HEK293 (cell line): ENCODE measurements at regions of chr17 and their contacts with region 1.

Region 1: DNA sequence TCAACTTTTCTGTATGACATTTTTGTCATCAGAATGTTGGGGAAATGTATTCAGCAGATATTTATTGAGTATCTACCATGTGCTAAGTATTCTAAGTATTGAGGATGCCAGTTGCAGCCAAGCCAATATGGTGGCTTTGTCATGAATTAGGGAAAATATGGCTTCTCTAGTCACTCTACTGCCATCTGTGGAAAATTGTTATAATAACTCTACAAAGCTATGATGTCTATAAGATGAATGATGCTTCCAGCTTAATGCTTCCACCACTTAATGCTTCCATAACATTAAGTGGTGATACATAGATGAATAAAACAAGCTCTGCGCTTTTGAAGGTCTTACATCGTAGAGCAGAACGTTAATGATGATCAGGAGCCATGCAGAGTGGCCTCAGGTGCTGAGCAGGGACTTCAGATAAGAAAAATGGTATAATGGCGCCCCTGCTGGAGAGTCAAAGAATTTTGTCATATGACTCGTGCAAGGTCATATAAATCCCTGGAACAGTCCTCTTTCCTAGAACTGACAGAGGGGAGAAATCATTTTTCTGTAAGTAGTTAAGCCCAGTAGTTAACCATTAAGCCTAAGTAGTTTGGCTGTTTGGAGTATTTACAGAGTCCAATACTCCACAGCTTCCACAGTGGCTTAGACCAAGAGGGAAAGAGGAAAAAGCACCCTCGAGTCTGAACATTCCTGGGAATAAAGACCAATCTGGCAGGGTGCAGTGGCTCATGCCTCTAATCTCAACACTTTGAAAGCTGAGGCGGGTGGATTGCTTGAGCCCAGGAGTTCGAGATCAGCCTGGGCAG is 2.7 kb upstream of the TMIGD1 start:
- H3K4me3 ChIP-seq: no peak overlapping the region
- H3K27ac ChIP-seq: no peak overlapping the region
- H3K4me1 ChIP-seq: peaks cover 4% of the 10 kb centered on the region
- CTCF ChIP-seq: peak; percentile 23; the same call in 1 of the 2 replicates

Region 2: DNA sequence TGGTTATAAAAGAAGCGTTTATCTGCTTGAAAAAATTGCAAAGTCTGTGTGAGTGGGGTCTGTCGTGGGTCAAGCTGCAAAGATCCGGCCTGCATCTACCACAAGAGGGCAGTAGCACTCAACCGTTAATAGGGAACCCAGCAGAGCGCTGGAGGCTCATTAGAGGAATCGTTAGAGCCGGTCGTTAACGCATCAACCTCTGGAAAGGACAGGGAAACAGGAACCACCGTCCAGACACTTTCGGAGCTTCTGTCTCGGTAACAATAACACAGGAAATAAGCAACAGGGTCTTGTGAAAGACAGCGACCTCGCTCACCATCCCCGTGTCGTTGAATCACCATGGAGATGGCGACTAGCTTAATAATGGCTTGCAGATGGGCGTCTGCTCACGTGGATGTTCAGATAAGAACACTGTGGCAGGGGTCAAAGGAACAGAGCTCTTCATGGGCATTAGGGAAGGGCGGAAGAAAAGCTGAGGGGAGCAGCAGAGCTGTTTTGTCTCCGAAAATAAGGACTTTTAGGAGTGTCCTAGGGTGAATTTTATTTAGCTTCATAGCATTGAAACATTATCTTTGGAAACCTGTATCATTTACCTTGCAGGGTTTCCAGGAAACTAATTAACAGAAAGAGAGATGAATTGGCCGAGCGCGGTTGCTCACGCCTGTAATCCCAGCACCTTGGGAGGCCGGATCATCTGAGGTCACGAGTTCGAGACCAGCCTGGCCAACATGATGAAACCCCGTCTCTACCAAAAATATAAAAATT is 231.8 kb before region 1 on chr17:
- CTCF ChIA-PET with region 1: interaction called, 170 read pairs
- POLR2A ChIA-PET with region 1: interaction called, 6 read pairs
- H3K4me3 ChIP-seq: peak overlapping the region; percentile 40
- H3K27ac ChIP-seq: peak overlapping the region; percentile 26; the same call in 1 of the 2 replicates
- H3K4me1 ChIP-seq: no peaks in the 10 kb centered on the region
- CTCF ChIP-seq: peak; percentile 83

Region 3: GRCh38 chr17:30278032-30278431 is 58.5 kb before region 1 on chr17:
- CTCF ChIA-PET with region 1: interaction called, 17 read pairs
- POLR2A ChIA-PET with region 1: no interaction called
- H3K4me3 ChIP-seq: no peak overlapping the region
- H3K27ac ChIP-seq: no peak overlapping the region
- H3K4me1 ChIP-seq: no peaks in the 10 kb centered on the region
- CTCF ChIP-seq: no peak

Region 4: DNA sequence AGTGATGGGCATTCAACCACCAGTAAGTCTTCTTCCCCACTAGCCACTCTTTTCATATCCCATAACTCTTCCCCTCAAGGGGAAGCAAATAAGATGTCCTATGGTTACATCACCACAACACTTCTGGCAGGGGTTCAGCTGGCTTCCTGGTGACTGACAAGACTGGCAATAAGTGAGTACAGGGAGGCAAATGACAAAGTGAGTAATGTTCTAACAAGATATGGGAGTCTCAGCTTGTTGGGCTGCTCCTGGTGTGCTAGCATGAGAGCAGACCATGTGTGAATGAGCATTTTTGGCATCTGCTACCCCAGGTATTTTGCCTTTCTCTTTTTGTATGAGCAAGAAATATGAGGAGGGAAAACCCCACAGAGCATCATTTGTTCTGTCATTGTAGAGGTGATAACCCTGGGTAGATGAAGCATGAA is 12.7 kb before region 1 on chr17:
- CTCF ChIA-PET with region 1: interaction called, 31 read pairs
- POLR2A ChIA-PET with region 1: interaction called, 5 read pairs
- H3K4me3 ChIP-seq: no peak overlapping the region
- H3K27ac ChIP-seq: no peak overlapping the region
- H3K4me1 ChIP-seq: 0 out of 2 replicates have a peak, but pooled peaks cover 3% of the 10 kb centered on the region
- CTCF ChIP-seq: no peak

Region 5: GRCh38 chr17:30477083-30477773 is 140.7 kb after region 1 on chr17 and contains the start of gene GOSR1:
- CTCF ChIA-PET with region 1: interaction called, 19 read pairs
- POLR2A ChIA-PET with region 1: no interaction called
- H3K4me3 ChIP-seq: peak within 1 kb of the TSS; percentile 73
- H3K27ac ChIP-seq: peak within 1 kb of the TSS; percentile 77
- H3K4me1 ChIP-seq: peaks cover 5% of the 10 kb centered on the region; the same call in 1 of the 2 replicates
- CTCF ChIP-seq: peak; percentile 95